HepG2 (cell line): ENCODE measurements at regions of chr5 and their contacts with region 1.

Region 1: DNA sequence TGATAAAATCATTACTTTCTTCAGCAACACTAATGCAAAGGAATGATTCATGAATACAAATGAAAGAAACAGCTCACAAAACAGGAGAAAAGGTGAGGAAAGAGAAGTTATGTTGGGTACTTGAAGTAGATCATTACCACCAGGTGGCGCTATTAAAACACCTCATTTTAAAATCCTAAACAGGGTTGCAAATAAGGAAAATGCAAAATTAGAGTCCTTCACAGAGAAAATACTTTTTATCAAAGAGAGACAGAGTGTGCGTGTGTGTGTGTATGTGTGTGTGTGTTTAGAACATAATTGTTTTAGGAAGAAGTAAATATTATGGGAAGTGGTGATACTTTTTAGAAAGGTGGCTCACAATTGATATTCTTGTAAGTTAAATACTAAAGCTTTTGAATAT is 49.5 kb upstream of the CD180 start:
- DNase-seq: peak; percentile 49
- ATAC-seq: no peak; the same call in 2 of the 3 replicates
- H3K4me3 ChIP-seq: no peak overlapping the region
- H3K27ac ChIP-seq: no peak overlapping the region
- H3K4me1 ChIP-seq: peaks cover 13% of the 10 kb centered on the region
- H3K27me3 ChIP-seq: no peaks in the 10 kb centered on the region
- CTCF ChIP-seq: peak; percentile 71
- EP300 ChIP-seq: no peak
- POLR2A ChIP-seq: no peak
- RAD21 ChIP-seq: peak; percentile 65; the same call in 1 of the 2 replicates

Region 2: DNA sequence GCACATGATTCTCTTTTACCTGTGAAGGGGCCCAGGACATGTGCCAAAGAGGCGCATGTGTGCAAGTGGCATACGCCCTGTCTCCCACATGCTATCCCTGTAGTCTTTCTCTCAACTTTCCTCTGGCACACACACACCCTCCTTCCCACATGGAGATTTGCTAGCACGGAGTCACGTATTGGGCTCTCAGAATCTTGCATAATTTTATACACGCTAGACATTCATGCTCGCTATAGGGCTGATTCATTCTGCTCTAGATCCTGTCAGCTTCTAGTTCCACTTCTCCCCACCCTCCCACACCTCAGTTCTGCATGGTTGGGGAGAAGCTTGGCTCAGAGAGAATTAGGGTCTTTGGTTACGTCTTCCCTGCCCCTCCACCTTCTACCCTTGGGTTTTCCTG is 122.3 kb before region 1 on chr5:
- CTCF ChIA-PET with region 1: no interaction called
- POLR2A ChIA-PET with region 1: no interaction called
- in situ Hi-C with region 1: no loop called
- intact Hi-C with region 1: no loop called
- DNase-seq: no peak
- ATAC-seq: no peak
- H3K4me3 ChIP-seq: no peak overlapping the region
- H3K27ac ChIP-seq: no peak overlapping the region
- H3K4me1 ChIP-seq: no peaks in the 10 kb centered on the region
- H3K27me3 ChIP-seq: no peaks in the 10 kb centered on the region
- CTCF ChIP-seq: no peak
- EP300 ChIP-seq: no peak
- POLR2A ChIP-seq: no peak
- RAD21 ChIP-seq: no peak

Region 3: GRCh38 chr5:67493676-67494075 is 247.6 kb after region 1 on chr5:
- CTCF ChIA-PET with region 1: no interaction called
- POLR2A ChIA-PET with region 1: no interaction called
- in situ Hi-C with region 1: no loop called
- intact Hi-C with region 1: loop called (anchors 10 kb)
- DNase-seq: peak; percentile 55
- ATAC-seq: peak; percentile 98
- H3K4me3 ChIP-seq: no peak overlapping the region
- H3K27ac ChIP-seq: no peak overlapping the region
- H3K4me1 ChIP-seq: no peaks in the 10 kb centered on the region
- H3K27me3 ChIP-seq: no peaks in the 10 kb centered on the region
- CTCF ChIP-seq: peak; percentile 87
- EP300 ChIP-seq: no peak
- POLR2A ChIP-seq: no peak
- RAD21 ChIP-seq: peak; percentile 74; the same call in 1 of the 2 replicates

Region 4: GRCh38 chr5:67537439-67538148 is 291.5 kb after region 1 on chr5:
- CTCF ChIA-PET with region 1: no interaction called
- POLR2A ChIA-PET with region 1: no interaction called
- in situ Hi-C with region 1: no loop called
- intact Hi-C with region 1: no loop called
- DNase-seq: no peak
- ATAC-seq: no peak
- H3K4me3 ChIP-seq: no peak overlapping the region
- H3K27ac ChIP-seq: no peak overlapping the region
- H3K4me1 ChIP-seq: 0 out of 2 replicates have a peak, but pooled peaks cover 5% of the 10 kb centered on the region
- H3K27me3 ChIP-seq: no peaks in the 10 kb centered on the region
- CTCF ChIP-seq: no peak
- EP300 ChIP-seq: no peak
- POLR2A ChIP-seq: no peak
- RAD21 ChIP-seq: no peak